ENCODE measurements at regions of chr1 and their contacts with region 1.

Region 1: DNA sequence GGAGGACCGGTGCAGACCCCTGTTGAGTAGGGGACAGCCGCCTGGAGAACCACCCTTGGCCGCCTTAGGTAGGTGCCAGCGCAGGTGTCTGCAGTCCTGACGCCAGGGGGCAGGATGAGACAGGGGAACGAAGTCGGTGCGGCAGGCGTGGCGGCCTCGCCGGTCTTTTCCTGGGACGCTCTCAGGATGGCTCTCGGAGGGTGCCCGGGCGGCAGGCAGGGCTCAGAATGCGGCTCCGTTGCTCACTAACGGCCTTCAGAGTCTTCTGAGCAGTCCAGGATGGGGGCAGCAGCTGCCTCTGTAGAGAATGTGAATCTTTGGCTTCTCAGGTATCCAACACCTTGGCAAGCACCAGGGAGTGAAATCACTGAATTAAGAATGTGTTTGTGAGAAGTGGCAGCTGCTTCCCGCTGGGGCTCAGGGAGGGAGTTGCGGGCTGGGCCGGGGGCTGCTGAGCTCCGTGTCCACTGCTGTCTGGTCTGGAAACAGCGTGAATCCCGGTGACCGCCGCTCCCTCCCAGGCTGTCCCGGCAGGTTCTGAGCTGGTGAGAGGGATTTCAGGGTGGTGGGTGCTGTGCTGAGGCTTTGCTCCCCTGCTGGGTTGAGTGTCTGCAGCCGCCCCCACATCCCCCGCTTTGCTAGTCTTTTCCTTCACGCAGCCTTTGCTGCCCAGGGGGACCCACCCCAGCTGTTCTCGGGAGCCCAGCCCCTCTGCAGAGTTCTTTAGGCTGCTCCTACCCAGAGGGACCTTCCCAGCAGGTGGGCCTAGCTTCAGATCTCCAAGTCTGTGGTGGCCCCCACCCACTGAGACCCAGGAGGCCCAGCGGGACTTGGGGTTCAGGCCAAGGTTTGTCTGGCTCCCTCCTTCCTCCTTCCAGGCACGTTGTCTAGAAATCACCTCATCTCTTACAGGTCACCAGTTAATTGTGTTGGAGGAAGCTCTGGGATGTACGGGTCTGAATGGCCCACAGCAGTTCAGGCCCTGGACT is 11.1 kb upstream of the C1orf174 start:
- DNase-seq: peak; percentile 79 to 84 (median 82)
- ATAC-seq: peak; percentile 91
- H3K4me3 ChIP-seq: no peak overlapping the region
- H3K27ac ChIP-seq: no peak overlapping the region
- H3K4me1 ChIP-seq: peaks cover 10% of the 10 kb centered on the region
- H3K27me3 ChIP-seq: no peaks in the 10 kb centered on the region
- CTCF ChIP-seq: peak; percentile 67 to 85 (median 74)
- POLR2A ChIP-seq: no peak

Region 2: DNA sequence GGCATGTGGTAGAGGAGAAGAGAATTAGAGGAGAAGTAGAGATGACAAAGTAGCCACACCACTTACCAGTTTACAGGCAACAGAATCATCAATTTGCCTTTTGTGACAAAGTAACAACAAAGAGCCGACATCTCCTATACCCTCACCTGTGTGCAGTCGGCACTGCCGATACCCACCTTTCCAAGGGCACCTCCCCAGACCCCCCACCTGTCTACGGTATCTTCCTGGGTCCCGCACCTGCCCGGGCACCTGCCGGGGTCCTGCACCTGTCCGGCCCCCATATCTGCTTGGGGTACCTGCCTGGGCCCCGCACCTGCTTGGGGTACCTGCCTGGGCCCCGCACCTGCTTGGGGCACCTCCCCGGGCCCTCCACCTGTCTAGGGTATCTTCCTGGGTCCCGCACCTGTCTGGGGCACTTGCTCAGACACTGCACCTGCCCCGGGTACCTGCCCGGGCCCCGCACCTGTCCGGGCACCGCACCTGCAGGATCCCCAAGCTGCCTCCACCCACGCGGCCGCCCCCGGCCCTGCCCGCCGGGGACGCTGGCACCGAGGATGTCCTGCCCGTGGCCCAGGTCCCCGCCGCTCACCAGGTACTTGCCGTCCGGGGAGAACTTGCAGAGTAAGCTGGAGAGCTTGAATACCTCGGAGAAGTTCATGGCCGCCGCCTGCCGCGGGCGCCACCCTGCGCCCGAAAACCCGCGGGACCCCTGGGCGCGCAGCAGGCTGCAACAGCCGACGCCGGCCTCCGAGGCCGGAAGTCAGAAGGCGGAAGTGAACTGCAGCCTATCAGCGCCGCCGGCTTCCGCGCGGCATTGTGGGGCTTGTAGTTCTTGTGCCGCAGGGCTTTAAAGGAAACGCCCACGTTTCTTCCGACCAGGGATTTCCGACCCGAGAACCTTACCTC is 261.6 kb before region 1 on chr1 and contains the start of gene WRAP73:
- intact Hi-C with region 1: no loop called
- DNase-seq: peak; percentile 87 to 92 (median 90)
- ATAC-seq: peak; percentile 96
- H3K4me3 ChIP-seq: peak within 1 kb of the TSS; percentile 79 to 95
- H3K27ac ChIP-seq: peak within 1 kb of the TSS in 1 of 4 donors; percentile 42
- H3K4me1 ChIP-seq: peaks cover 50% of the 10 kb centered on the region
- H3K27me3 ChIP-seq: peaks cover 0 to 32% of the 10 kb centered on the region in 2 donors
- CTCF ChIP-seq: peak in 1 of 7 experiments; percentile 30
- POLR2A ChIP-seq: peak; percentile 46 to 82 (median 81)
- total RNA-seq, gene WRAP73: 7.8 to 35.6 TPM

Region 3: DNA sequence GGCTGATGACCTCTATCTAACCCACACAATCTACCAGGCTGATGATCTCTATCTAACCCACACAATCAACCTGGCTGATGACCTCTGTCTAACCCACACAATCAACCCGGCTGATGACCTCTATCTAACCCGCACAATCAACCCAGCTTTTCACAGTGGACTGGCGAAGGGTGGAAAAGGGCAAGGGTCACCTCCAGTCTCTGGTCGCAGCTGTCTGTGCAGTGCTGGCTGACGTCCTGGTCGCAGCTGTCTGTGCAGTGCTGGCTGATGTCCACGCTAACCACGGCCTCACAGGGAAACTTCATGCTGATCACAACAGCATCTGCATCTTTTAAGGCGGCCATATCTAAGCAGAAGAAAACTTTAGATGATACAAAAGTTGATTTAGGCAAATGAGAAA is 171.1 kb before region 1 on chr1:
- intact Hi-C with region 1: no loop called
- DNase-seq: no peak
- ATAC-seq: no peak
- H3K4me3 ChIP-seq: no peak overlapping the region
- H3K27ac ChIP-seq: no peak overlapping the region
- H3K4me1 ChIP-seq: peaks cover 7% of the 10 kb centered on the region
- H3K27me3 ChIP-seq: no peaks in the 10 kb centered on the region
- CTCF ChIP-seq: no peak
- POLR2A ChIP-seq: no peak

Region 4: GRCh38 chr1:4081806-4082711 is 170.9 kb after region 1 on chr1:
- intact Hi-C with region 1: no loop called
- DNase-seq: no peak
- ATAC-seq: no peak
- H3K4me3 ChIP-seq: no peak overlapping the region
- H3K27ac ChIP-seq: no peak overlapping the region
- H3K4me1 ChIP-seq: peaks cover 27% of the 10 kb centered on the region
- H3K27me3 ChIP-seq: no peaks in the 10 kb centered on the region
- CTCF ChIP-seq: no peak
- POLR2A ChIP-seq: no peak

Region 5: GRCh38 chr1:5745776-5746610 is 1834.8 kb after region 1 on chr1:
- intact Hi-C with region 1: loop called (anchors 5 kb)
- DNase-seq: peak; percentile 70 to 72 (median 70)
- ATAC-seq: peak; percentile 85
- H3K4me3 ChIP-seq: no peak overlapping the region
- H3K27ac ChIP-seq: no peak overlapping the region
- H3K4me1 ChIP-seq: no peaks in the 10 kb centered on the region
- H3K27me3 ChIP-seq: peaks cover 0 to 18% of the 10 kb centered on the region in 2 donors
- CTCF ChIP-seq: peak; percentile 89 to 94 (median 92)
- POLR2A ChIP-seq: no peak